Psoas muscle (tissue), 8 donors: ENCODE measurements at regions of chr18 and their contacts with region 1.

Region 1: DNA sequence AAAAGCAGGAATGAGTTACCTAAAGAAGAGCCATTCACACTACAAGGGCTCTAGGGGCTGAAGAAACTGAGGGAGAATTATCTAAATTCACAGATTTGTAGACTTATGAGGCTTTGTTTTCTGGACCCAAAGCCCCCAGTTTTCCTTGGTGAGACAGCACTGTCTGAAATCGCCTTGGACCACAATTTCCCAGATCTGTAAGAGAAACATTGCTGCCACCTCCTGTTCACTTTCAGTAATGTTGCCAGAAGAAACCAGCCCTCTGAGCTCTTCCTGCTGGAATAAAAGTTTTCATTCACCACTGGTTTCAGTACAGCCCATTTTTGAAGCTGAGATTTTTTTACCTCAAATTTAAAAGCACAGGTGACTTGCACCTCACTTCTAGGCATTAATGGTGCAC is 169.2 kb downstream of the CDH20 start:
- DNase-seq: no peak
- ATAC-seq: peak in 1 of 4 donors; percentile 52
- H3K4me3 ChIP-seq: no peak overlapping the region
- H3K27ac ChIP-seq: no peak overlapping the region
- H3K4me1 ChIP-seq: no peaks in the 10 kb centered on the region
- H3K27me3 ChIP-seq: peaks cover 0 to 3% (median 0%) of the 10 kb centered on the region in 3 donors
- CTCF ChIP-seq: peak; percentile 49

Region 2: GRCh38 chr18:59988098-59988706 is 1514.3 kb before region 1 on chr18:
- intact Hi-C with region 1: loop called in 1 of 2 experiments (anchors 10 kb)
- DNase-seq: peak; percentile 29 to 46
- ATAC-seq: no peak
- H3K4me3 ChIP-seq: no peak overlapping the region
- H3K27ac ChIP-seq: no peak overlapping the region
- H3K4me1 ChIP-seq: no peaks in the 10 kb centered on the region
- H3K27me3 ChIP-seq: no peaks in the 10 kb centered on the region
- CTCF ChIP-seq: peak; percentile 85

Region 3: GRCh38 chr18:60656553-60656952 is 845.9 kb before region 1 on chr18:
- intact Hi-C with region 1: no loop called
- DNase-seq: no peak
- ATAC-seq: no peak
- H3K4me3 ChIP-seq: no peak overlapping the region
- H3K27ac ChIP-seq: no peak overlapping the region
- H3K4me1 ChIP-seq: no peaks in the 10 kb centered on the region
- H3K27me3 ChIP-seq: no peaks in the 10 kb centered on the region
- CTCF ChIP-seq: no peak

Region 4: DNA sequence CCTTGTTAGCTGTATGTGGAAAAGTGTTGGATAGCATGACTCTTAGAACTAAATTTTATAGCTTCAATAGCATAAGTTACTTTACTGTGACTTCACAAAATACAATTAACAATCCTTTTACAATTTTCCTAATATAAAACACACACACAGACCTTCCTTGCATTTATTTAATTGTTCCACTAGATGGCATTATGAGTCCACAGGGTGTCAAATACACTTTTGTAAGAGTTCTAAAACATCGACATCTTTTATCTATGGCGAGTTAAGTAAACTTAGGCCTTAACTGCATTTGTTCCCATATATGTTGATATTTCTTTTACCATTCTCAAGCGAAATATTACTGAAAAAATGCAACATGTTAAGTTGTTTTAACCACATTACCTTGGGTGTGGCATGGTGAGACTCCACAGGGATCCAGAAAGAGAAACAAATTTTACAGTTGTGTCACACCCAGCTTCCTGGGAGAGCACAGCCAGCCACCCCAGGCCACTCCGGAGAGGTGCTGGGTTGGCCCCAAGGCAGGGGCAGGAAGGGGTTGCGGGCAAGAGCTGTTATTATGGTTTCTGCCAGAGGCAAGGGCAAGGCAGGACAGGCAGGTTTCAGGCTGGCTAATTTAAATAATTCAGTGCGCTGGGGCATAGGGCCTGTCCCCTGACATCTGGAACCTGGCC is 817.5 kb before region 1 on chr18:
- intact Hi-C with region 1: loop called in 1 of 2 experiments (anchors 10 kb)
- DNase-seq: peak in 1 of 2 donors; percentile 31
- ATAC-seq: no peak
- H3K4me3 ChIP-seq: no peak overlapping the region
- H3K27ac ChIP-seq: no peak overlapping the region
- H3K4me1 ChIP-seq: no peaks in the 10 kb centered on the region
- H3K27me3 ChIP-seq: no peaks in the 10 kb centered on the region
- CTCF ChIP-seq: peak; percentile 43

Region 5: DNA sequence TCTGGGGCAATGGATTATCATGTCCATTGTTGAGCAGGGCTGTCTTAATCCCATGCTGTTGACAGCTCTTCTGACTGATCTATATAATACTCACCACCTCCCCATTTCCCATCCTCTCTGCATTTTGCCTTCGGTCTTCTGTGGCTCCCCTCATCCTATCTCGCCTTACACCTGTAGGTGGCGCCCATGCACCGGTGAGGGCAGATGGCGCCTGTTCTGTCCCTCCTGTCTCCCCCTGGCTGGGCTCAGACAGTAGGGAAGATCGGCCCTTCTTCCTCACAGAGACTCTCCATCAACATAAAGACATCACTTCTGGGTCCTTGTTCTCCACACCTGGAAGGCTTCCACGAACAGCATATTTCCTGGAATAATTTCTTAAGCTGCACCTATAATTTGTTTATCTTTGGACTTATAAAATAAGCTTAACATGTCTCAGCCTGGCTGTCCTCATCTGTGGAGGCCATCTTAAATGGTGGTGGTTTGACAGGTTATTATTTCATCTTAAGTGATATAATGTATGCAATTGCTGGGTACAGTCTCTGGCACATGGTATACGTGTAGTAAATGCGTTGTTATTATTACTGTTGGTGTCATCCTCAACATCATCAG is 180.1 kb before region 1 on chr18:
- intact Hi-C with region 1: loop called in 1 of 2 experiments (anchors 10 kb)
- DNase-seq: peak in 1 of 2 donors; percentile 30
- ATAC-seq: peak in 2 of 4 donors; percentile 65 to 66
- H3K4me3 ChIP-seq: no peak overlapping the region
- H3K27ac ChIP-seq: no peak overlapping the region
- H3K4me1 ChIP-seq: no peaks in the 10 kb centered on the region
- H3K27me3 ChIP-seq: no peaks in the 10 kb centered on the region
- CTCF ChIP-seq: peak; percentile 22